ENCODE measurements at regions of chr2 and their contacts with region 1.

Region 1: GRCh38 chr2:36507408-36507812 is 90.6 kb downstream of the FEZ2 start:
- DNase-seq: peak; percentile 60 to 72
- ATAC-seq: peak; percentile 92 to 94
- H3K4me3 ChIP-seq: no peak overlapping the region
- H3K27ac ChIP-seq: peak overlapping the region; percentile 25 to 31; a peak in 3 of 6 replicates
- H3K4me1 ChIP-seq: peaks cover 58% of the 10 kb centered on the region
- CTCF ChIP-seq: peak; percentile 87
- EP300 ChIP-seq: no peak
- POLR2A ChIP-seq: no peak
- RAD21 ChIP-seq: peak; percentile 92 to 97

Region 2: DNA sequence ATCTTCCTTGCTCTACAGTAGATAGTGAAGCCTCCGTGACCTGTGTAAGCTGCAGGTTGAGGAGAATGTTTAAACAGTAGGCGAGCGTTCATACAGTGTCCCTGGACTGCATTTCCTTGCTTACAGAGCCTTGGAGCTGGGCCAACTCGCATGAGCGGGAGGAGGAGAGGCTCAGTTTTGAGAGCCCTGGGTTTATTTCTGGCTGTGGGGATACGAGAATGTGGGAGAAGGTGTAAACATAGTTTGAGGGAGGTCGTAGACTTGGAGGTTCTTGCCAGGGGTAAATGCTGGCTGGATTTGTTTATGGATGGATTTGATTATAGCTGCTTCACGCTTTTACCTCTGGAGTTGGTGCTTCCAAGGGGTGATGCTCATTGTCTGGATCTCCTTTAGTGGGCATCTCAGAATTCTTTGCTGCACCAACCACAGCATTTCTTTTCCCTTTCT is 131.1 kb before region 1 on chr2:
- CTCF ChIA-PET with region 1: interaction called, 10 read pairs
- POLR2A ChIA-PET with region 1: no interaction called
- DNase-seq: peak in 1 of 2 experiments; percentile 77
- ATAC-seq: peak; percentile 16 to 25; a peak in 4 of 6 replicates
- H3K4me3 ChIP-seq: peak overlapping the region; percentile 17
- H3K27ac ChIP-seq: peak overlapping the region; percentile 75 to 84
- H3K4me1 ChIP-seq: peaks cover 100% of the 10 kb centered on the region
- CTCF ChIP-seq: no peak
- EP300 ChIP-seq: no peak
- POLR2A ChIP-seq: no peak
- RAD21 ChIP-seq: no peak

Region 3: GRCh38 chr2:36486546-36487044 is 20.8 kb before region 1 on chr2:
- CTCF ChIA-PET with region 1: interaction called, 14 read pairs
- POLR2A ChIA-PET with region 1: no interaction called
- DNase-seq: peak in 1 of 2 experiments; percentile 55
- ATAC-seq: peak; percentile 39 to 43; a peak in 3 of 6 replicates
- H3K4me3 ChIP-seq: peak overlapping the region; percentile 5; the same call in 1 of the 3 replicates
- H3K27ac ChIP-seq: peak overlapping the region; percentile 84
- H3K4me1 ChIP-seq: peaks cover 100% of the 10 kb centered on the region
- CTCF ChIP-seq: no peak
- EP300 ChIP-seq: peak; percentile 78 to 81; a peak in 3 of 5 replicates
- POLR2A ChIP-seq: no peak
- RAD21 ChIP-seq: 0 out of 5 replicates have a peak, but pooled peaks of 1 of the 2 experiments have one; percentile 17